Heart right ventricle (tissue), 16 donors: ENCODE measurements at regions of chr1 and their contacts with region 1.

Region 1: DNA sequence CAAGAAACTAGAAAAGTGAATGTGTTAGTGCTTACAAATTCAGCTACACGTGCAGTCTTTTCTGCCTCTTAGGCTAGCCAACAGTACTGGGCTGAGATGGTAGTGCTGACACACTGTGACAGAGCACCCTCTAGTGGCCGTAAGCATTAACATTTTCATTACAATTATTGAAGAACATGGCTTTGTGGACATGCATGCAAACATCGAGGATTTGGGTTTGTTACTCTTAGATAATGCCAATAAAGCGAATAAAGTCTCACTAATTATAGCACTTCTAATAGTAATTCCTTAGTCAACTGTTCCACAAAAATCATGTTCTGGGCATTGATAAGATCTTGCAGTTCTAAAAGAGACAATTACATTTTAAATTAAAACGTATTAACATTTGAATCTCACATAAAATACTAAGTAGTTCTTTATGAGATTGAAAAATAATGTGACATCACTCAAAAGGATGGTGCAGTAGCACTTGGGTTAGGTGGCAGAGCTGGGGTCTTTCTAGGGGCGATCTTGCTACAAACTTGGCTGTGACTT is 47.1 kb downstream of the MYSM1 start:
- DNase-seq: peak in 1 of 2 donors; percentile 61
- ATAC-seq: peak; percentile 77 to 92 (median 86)
- H3K4me3 ChIP-seq: no peak overlapping the region
- H3K27ac ChIP-seq: no peak overlapping the region
- H3K4me1 ChIP-seq: peaks cover 0 to 13% (median 0%) of the 10 kb centered on the region in 9 donors
- H3K27me3 ChIP-seq: no peaks in the 10 kb centered on the region
- CTCF ChIP-seq: peak; percentile 67 to 88 (median 82)

Region 2: GRCh38 chr1:58546520-58547308 is 106.0 kb before region 1 on chr1 and contains the start of gene OMA1:
- intact Hi-C with region 1: loop called in 5 of 10 experiments (anchors 1 to 10 kb)
- DNase-seq: peak; percentile 97 to 98
- ATAC-seq: peak; percentile 99 to 100 (median 99)
- H3K4me3 ChIP-seq: peak within 1 kb of the TSS; percentile 37 to 87 (median 78)
- H3K27ac ChIP-seq: peak within 1 kb of the TSS; percentile 97 to 100 (median 99)
- H3K4me1 ChIP-seq: peaks cover 0 to 21% (median 14%) of the 10 kb centered on the region in 9 donors
- H3K27me3 ChIP-seq: no peaks in the 10 kb centered on the region
- CTCF ChIP-seq: peak; percentile 94 to 99 (median 97)
- total RNA-seq, gene OMA1: 20.7 to 50.9 (median 37.4) TPM